Activated T-helper 1 cell treated with anti-CD3 and anti-CD28 coated beads, Interleukin-12 subunit alpha, Interleukin-12 subunit beta, Interleukin-2, Interleukin-4 antibody, amounts not matched to agents 30 ng/mL and 10 ng/mL and 1 ng/mL, durations not matched to agents 14 hours and 24 hours and 36 hours (primary cell): ENCODE measurements at regions of chr3 and their contacts with region 1.

Region 1: DNA sequence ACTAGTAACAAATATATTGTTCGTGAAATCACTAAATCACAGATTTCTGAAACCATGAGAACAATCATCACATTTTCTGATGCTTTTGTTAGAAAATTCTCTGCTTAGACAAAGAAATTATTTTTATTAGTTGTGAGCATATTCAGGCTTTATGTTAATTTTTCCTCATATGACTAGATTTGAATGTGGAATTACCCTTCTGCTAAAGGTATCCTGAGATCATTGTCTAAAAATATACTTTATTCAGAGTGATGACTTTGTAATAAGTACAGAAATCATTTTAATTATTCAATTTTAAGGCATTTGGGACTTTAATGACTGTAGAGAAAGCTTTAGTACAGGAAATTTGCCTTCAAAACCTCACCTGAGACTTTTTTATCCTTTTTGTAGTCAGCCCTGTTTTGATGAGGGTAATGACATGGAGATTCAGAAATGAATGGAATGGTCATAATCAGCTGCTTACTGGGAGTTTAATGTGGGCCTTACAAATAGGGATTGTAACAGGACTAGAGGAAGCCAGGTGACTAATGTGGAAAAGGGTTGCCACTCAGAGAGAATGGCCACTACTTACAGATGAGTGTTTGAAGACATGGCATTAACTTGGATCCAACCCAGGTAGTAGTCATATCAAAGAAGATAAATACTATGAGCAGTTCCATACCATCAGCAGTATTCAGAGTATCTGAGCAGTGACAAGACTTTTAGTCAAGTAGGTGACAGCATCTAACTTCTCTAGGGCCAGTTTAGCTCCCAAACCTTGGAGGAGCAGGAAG is 148.3 kb downstream of the MBNL1 start:
- DNase-seq: no peak
- H3K4me3 Mint-ChIP-seq: no peak overlapping the region
- H3K27ac Mint-ChIP-seq: peak overlapping the region; percentile 27
- H3K4me1 Mint-ChIP-seq: peaks cover 58% of the 10 kb centered on the region
- H3K27me3 Mint-ChIP-seq: no peaks in the 10 kb centered on the region

Region 2: GRCh38 chr3:151960961-151961579 is 455.9 kb before region 1 on chr3:
- intact Hi-C with region 1: no loop called
- DNase-seq: no peak
- H3K4me3 Mint-ChIP-seq: no peak overlapping the region
- H3K27ac Mint-ChIP-seq: no peak overlapping the region
- H3K4me1 Mint-ChIP-seq: no peaks in the 10 kb centered on the region
- H3K27me3 Mint-ChIP-seq: peaks cover 14% of the 10 kb centered on the region

Region 3: GRCh38 chr3:152346740-152347139 is 70.3 kb before region 1 on chr3:
- intact Hi-C with region 1: no loop called
- DNase-seq: no peak
- H3K4me3 Mint-ChIP-seq: no peak overlapping the region
- H3K27ac Mint-ChIP-seq: no peak overlapping the region
- H3K4me1 Mint-ChIP-seq: peaks cover 16% of the 10 kb centered on the region
- H3K27me3 Mint-ChIP-seq: no peaks in the 10 kb centered on the region

Region 4: GRCh38 chr3:152356870-152357276 is 60.1 kb before region 1 on chr3:
- intact Hi-C with region 1: loop called (anchors 5 kb)
- DNase-seq: no peak
- H3K4me3 Mint-ChIP-seq: no peak overlapping the region
- H3K27ac Mint-ChIP-seq: peak overlapping the region; percentile 64
- H3K4me1 Mint-ChIP-seq: peaks cover 63% of the 10 kb centered on the region
- H3K27me3 Mint-ChIP-seq: no peaks in the 10 kb centered on the region

Region 5: GRCh38 chr3:152402695-152403451 is 14.1 kb before region 1 on chr3:
- intact Hi-C with region 1: loop called (anchors 1 kb)
- DNase-seq: no peak
- H3K4me3 Mint-ChIP-seq: no peak overlapping the region
- H3K27ac Mint-ChIP-seq: peak overlapping the region; percentile 86
- H3K4me1 Mint-ChIP-seq: peaks cover 79% of the 10 kb centered on the region
- H3K27me3 Mint-ChIP-seq: no peaks in the 10 kb centered on the region